PC-3 (cell line): ENCODE measurements at regions of chr4 and their contacts with region 1.

Region 1: GRCh38 chr4:127586922-127587571 is 45.7 kb upstream of the INTU start:
- DNase-seq: peak; percentile 61
- ATAC-seq: peak; percentile 92
- H3K4me3 ChIP-seq: no peak overlapping the region
- H3K27ac ChIP-seq: no peak overlapping the region
- H3K4me1 ChIP-seq: no peaks in the 10 kb centered on the region
- H3K27me3 ChIP-seq: no peaks in the 10 kb centered on the region
- CTCF ChIP-seq: peak; percentile 75

Region 2: DNA sequence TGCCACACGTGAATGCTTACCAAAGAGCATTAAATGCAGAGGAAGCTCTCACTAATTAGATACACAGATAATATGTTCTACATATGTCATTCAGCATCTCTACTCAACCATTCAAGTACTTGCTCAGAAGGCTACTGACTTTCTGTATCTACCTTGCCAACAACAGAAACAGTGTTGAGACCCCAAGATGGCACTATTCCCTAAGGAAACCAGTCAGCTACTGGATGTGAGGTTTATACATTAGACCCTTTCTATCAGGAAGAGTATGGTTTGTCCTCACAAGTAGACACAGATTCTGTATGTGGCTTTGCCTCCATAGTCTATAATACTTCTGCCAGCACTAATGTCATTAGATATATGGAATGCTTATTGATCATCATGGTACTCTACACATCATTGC is 398.2 kb before region 1 on chr4:
- CTCF ChIA-PET with region 1: no interaction called
- POLR2A ChIA-PET with region 1: no interaction called
- intact Hi-C with region 1: loop called (anchors 2 kb)
- DNase-seq: peak; percentile 3
- ATAC-seq: peak; percentile 29; the same call in 1 of the 2 replicates
- H3K4me3 ChIP-seq: no peak overlapping the region
- H3K27ac ChIP-seq: no peak overlapping the region
- H3K4me1 ChIP-seq: no peaks in the 10 kb centered on the region
- H3K27me3 ChIP-seq: no peaks in the 10 kb centered on the region
- CTCF ChIP-seq: 0 out of 2 replicates have a peak, but pooled peaks have one; percentile 15

Region 3: DNA sequence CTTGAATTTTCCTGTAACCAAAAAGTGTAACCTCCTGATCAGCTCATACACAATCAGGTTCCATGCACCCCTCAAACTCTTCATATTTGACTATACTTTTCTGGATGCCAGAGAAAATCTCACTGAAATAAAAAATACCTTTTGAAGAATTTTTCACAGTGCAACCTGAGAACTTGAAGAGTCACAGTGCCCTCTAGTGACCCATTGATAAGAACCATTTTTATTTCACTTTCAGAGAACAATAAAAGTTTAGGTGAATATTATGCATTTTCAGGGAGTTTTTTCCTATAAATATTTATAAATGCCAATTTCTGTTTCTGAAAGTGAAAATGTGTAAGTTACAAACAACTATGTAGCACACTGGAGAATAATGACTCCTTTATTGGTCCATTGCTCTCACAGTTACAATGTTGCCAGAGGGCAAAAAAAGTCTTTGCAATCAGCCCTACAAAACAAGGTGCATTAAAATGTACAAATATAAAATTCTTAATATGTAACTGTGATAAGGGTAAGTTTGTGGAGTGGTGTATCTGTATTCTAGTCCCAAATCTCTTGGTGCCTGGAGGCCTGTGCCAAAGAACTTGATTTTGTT is 107.9 kb before region 1 on chr4:
- CTCF ChIA-PET with region 1: no interaction called
- POLR2A ChIA-PET with region 1: no interaction called
- intact Hi-C with region 1: loop called (anchors 2 kb)
- DNase-seq: peak; percentile 40
- ATAC-seq: no peak
- H3K4me3 ChIP-seq: no peak overlapping the region
- H3K27ac ChIP-seq: no peak overlapping the region
- H3K4me1 ChIP-seq: no peaks in the 10 kb centered on the region
- H3K27me3 ChIP-seq: no peaks in the 10 kb centered on the region
- CTCF ChIP-seq: peak; percentile 71

Region 4: DNA sequence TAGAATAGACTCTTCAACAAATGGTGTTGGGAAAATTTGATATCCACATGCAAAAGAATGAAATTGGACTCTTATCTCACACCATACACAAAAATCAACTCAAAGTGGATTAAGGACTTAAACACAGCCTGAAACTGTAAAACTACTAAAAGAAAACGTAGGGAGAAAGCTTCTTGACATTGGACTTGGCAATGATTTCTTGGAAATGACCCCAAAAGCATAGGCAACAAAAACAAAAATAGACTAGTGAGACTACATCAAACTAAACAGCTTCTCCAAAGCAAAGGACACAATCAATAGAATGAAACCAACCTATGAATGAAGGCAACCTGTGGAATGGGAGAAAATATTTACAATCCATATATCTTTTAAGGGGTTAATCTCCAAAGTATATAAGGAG is 49.0 kb before region 1 on chr4:
- CTCF ChIA-PET with region 1: no interaction called
- POLR2A ChIA-PET with region 1: no interaction called
- intact Hi-C with region 1: loop called (anchors 2 kb)
- DNase-seq: no peak
- ATAC-seq: no peak
- H3K4me3 ChIP-seq: no peak overlapping the region
- H3K27ac ChIP-seq: no peak overlapping the region
- H3K4me1 ChIP-seq: no peaks in the 10 kb centered on the region
- H3K27me3 ChIP-seq: no peaks in the 10 kb centered on the region
- CTCF ChIP-seq: no peak

Region 5: GRCh38 chr4:127548990-127549925 is 37.8 kb before region 1 on chr4:
- CTCF ChIA-PET with region 1: interaction called, 8 read pairs
- POLR2A ChIA-PET with region 1: interaction called, 3 read pairs
- intact Hi-C with region 1: loop called (anchors 1 kb)
- DNase-seq: peak; percentile 39
- ATAC-seq: peak; percentile 67
- H3K4me3 ChIP-seq: no peak overlapping the region
- H3K27ac ChIP-seq: no peak overlapping the region
- H3K4me1 ChIP-seq: peaks cover 12% of the 10 kb centered on the region; the same call in 1 of the 2 replicates
- H3K27me3 ChIP-seq: no peaks in the 10 kb centered on the region
- CTCF ChIP-seq: no peak

Region 6: DNA sequence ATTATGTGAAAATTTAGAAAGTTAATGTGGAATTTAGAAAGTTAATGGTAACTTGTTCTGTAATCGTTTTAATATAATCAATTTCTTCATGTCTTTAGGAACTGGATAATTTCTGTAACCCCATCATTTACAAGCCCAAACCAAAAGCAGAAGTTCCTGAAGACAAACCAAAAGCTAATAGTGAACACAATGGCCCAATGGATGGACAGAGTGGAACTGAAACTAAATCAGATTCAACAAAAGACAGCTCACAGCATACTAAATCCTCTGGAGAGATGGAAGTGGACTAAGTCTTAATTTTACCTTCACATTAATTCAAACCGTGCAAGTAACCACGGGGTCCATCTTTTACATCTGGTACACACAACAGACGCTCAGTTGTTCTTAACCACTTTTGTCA is 245.5 kb after region 1 on chr4:
- CTCF ChIA-PET with region 1: no interaction called
- POLR2A ChIA-PET with region 1: no interaction called
- intact Hi-C with region 1: no loop called
- DNase-seq: no peak
- ATAC-seq: no peak
- H3K4me3 ChIP-seq: no peak overlapping the region
- H3K27ac ChIP-seq: no peak overlapping the region
- H3K4me1 ChIP-seq: no peaks in the 10 kb centered on the region
- H3K27me3 ChIP-seq: no peaks in the 10 kb centered on the region
- CTCF ChIP-seq: no peak